ENCODE measurements at regions of chr11 and their contacts with region 1.

Region 1: DNA sequence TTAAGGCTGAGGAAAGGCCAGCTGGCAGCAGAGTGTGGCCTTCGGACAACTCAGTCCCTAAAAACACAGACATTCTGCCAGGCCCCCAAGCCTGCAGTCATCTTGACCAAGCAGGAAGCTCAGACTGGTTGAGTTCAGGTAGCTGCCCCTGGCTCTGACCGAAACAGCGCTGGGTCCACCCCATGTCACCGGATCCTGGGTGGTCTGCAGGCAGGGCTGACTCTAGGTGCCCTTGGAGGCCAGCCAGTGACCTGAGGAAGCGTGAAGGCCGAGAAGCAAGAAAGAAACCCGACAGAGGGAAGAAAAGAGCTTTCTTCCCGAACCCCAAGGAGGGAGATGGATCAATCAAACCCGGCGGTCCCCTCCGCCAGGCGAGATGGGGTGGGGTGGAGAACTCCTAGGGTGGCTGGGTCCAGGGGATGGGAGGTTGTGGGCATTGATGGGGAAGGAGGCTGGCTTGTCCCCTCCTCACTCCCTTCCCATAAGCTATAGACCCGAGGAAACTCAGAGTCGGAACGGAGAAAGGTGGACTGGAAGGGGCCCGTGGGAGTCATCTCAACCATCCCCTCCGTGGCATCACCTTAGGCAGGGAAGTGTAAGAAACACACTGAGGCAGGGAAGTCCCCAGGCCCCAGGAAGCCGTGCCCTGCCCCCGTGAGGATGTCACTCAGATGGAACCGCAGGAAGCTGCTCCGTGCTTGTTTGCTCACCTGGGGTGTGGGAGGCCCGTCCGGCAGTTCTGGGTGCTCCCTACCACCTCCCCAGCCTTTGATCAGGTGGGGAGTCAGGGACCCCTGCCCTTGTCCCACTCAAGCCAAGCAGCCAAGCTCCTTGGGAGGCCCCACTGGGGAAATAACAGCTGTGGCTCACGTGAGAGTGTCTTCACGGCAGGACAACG is 11.7 kb downstream of the CXCR5 start:
- DNase-seq: peak; percentile 54 to 92 (median 80)
- ATAC-seq: peak; percentile 73
- H3K4me3 ChIP-seq: peak overlapping the region in 1 of 2 experiments; percentile 35
- H3K4me3 Mint-ChIP-seq: peak overlapping the region; percentile 63
- H3K27ac ChIP-seq: peak overlapping the region; percentile 70 to 77
- H3K27ac Mint-ChIP-seq: peak overlapping the region; percentile 95
- H3K4me1 ChIP-seq: peaks cover 83% of the 10 kb centered on the region
- H3K4me1 Mint-ChIP-seq: peaks cover 84% of the 10 kb centered on the region
- H3K27me3 ChIP-seq: no peaks in the 10 kb centered on the region
- H3K27me3 Mint-ChIP-seq: no peaks in the 10 kb centered on the region
- CTCF ChIP-seq: no peak

Region 2: GRCh38 chr11:118785362-118785761 is 110.0 kb before region 1 on chr11:
- CTCF ChIA-PET with region 1: interaction called, 40 read pairs
- POLR2A ChIA-PET with region 1: interaction called, 182 read pairs
- intact Hi-C with region 1: no loop called
- DNase-seq: peak in 2 of 9 experiments; percentile 20 to 40
- ATAC-seq: no peak
- H3K4me3 ChIP-seq: no peak overlapping the region
- H3K4me3 Mint-ChIP-seq: peak overlapping the region; percentile 37
- H3K27ac ChIP-seq: peak overlapping the region in 1 of 2 experiments; percentile 23
- H3K27ac Mint-ChIP-seq: peak overlapping the region; percentile 45
- H3K4me1 ChIP-seq: peaks cover 72% of the 10 kb centered on the region
- H3K4me1 Mint-ChIP-seq: peaks cover 70% of the 10 kb centered on the region
- H3K27me3 ChIP-seq: no peaks in the 10 kb centered on the region
- H3K27me3 Mint-ChIP-seq: no peaks in the 10 kb centered on the region
- CTCF ChIP-seq: no peak

Region 3: GRCh38 chr11:118870396-118871345 is 24.7 kb before region 1 on chr11:
- CTCF ChIA-PET with region 1: interaction called, 21 read pairs
- POLR2A ChIA-PET with region 1: interaction called, 35 read pairs
- intact Hi-C with region 1: no loop called
- DNase-seq: peak in 3 of 9 experiments; percentile 19 to 72 (median 61)
- ATAC-seq: peak; percentile 41
- H3K4me3 ChIP-seq: peak overlapping the region; percentile 22 to 30
- H3K4me3 Mint-ChIP-seq: peak overlapping the region; percentile 79
- H3K27ac ChIP-seq: peak overlapping the region; percentile 83 to 86
- H3K27ac Mint-ChIP-seq: peak overlapping the region; percentile 99
- H3K4me1 ChIP-seq: peaks cover 61% of the 10 kb centered on the region
- H3K4me1 Mint-ChIP-seq: peaks cover 60% of the 10 kb centered on the region
- H3K27me3 ChIP-seq: no peaks in the 10 kb centered on the region
- H3K27me3 Mint-ChIP-seq: no peaks in the 10 kb centered on the region
- CTCF ChIP-seq: no peak

Region 4: DNA sequence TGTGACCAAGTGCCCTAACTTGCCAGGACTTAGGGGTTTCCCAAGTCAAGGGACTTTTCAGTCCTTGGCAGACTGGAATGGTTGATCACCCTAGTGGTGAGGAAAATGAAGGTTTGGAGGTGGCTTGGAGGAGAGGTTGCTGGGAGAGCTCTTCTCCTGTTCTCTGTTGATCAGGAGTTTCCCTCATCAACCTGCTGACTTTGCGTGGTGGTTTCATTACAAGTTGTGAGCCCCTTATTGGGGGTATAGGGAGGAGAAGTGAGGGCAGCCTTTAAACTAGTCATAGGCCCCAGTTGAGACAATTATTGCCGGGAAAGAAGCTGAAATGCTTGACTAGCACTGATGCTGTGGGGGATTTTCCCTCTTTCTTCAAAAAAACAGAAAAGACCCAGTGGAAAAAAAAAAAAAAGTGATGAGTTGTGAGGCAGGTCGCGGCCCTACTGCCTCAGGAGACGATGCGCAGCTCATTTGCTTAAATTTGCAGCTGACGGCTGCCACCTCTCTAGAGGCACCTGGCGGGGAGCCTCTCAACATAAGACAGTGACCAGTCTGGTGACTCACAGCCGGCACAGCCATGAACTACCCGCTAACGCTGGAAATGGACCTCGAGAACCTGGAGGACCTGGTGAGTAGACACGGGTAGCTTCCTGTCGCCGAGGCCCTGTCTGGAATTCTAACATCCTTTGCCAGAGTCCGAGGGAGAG is 11.9 kb before region 1 on chr11 and contains the start of gene CXCR5:
- CTCF ChIA-PET with region 1: interaction called, 34 read pairs
- POLR2A ChIA-PET with region 1: interaction called, 11 read pairs
- intact Hi-C with region 1: loop called in 1 of 2 experiments (anchors 1 kb)
- DNase-seq: peak in 3 of 9 experiments; percentile 43 to 66 (median 48)
- ATAC-seq: peak; percentile 45
- H3K4me3 ChIP-seq: peak within 1 kb of the TSS in 1 of 2 experiments; percentile 28
- H3K4me3 Mint-ChIP-seq: peak within 1 kb of the TSS; percentile 63
- H3K27ac ChIP-seq: no peak within 1 kb of the TSS
- H3K27ac Mint-ChIP-seq: peak within 1 kb of the TSS; percentile 62
- H3K4me1 ChIP-seq: peaks cover 47% of the 10 kb centered on the region
- H3K4me1 Mint-ChIP-seq: peaks cover 71% of the 10 kb centered on the region
- H3K27me3 ChIP-seq: no peaks in the 10 kb centered on the region
- H3K27me3 Mint-ChIP-seq: no peaks in the 10 kb centered on the region
- CTCF ChIP-seq: no peak
- total RNA-seq, gene CXCR5: 7.6 to 8.0 TPM

Region 5: GRCh38 chr11:118956094-118956846 is 60.9 kb after region 1 on chr11 and contains the start of gene UPK2:
- CTCF ChIA-PET with region 1: interaction called, 13 read pairs
- POLR2A ChIA-PET with region 1: no interaction called
- intact Hi-C with region 1: no loop called
- DNase-seq: peak; percentile 80 to 94 (median 88)
- ATAC-seq: peak; percentile 99
- H3K4me3 ChIP-seq: no peak within 1 kb of the TSS
- H3K4me3 Mint-ChIP-seq: no peak within 1 kb of the TSS
- H3K27ac ChIP-seq: no peak within 1 kb of the TSS
- H3K27ac Mint-ChIP-seq: peak within 1 kb of the TSS; percentile 35
- H3K4me1 ChIP-seq: peaks cover 7% of the 10 kb centered on the region
- H3K4me1 Mint-ChIP-seq: peaks cover 6% of the 10 kb centered on the region
- H3K27me3 ChIP-seq: no peaks in the 10 kb centered on the region
- H3K27me3 Mint-ChIP-seq: peaks cover 2% of the 10 kb centered on the region
- CTCF ChIP-seq: peak; percentile 82
- total RNA-seq, gene UPK2: not detected

Region 6: GRCh38 chr11:119891055-119891768 is 995.8 kb after region 1 on chr11:
- CTCF ChIA-PET with region 1: no interaction called
- POLR2A ChIA-PET with region 1: no interaction called
- intact Hi-C with region 1: no loop called
- DNase-seq: no peak
- ATAC-seq: no peak
- H3K4me3 ChIP-seq: no peak overlapping the region
- H3K4me3 Mint-ChIP-seq: no peak overlapping the region
- H3K27ac ChIP-seq: no peak overlapping the region
- H3K27ac Mint-ChIP-seq: no peak overlapping the region
- H3K4me1 ChIP-seq: no peaks in the 10 kb centered on the region
- H3K4me1 Mint-ChIP-seq: no peaks in the 10 kb centered on the region
- H3K27me3 ChIP-seq: no peaks in the 10 kb centered on the region
- H3K27me3 Mint-ChIP-seq: peaks cover 5% of the 10 kb centered on the region
- CTCF ChIP-seq: no peak

Measured in CD8-positive, alpha-beta T cell (primary cell).